IMR-90 (cell line): ENCODE measurements at regions of chr3 and their contacts with region 1.

Region 1: DNA sequence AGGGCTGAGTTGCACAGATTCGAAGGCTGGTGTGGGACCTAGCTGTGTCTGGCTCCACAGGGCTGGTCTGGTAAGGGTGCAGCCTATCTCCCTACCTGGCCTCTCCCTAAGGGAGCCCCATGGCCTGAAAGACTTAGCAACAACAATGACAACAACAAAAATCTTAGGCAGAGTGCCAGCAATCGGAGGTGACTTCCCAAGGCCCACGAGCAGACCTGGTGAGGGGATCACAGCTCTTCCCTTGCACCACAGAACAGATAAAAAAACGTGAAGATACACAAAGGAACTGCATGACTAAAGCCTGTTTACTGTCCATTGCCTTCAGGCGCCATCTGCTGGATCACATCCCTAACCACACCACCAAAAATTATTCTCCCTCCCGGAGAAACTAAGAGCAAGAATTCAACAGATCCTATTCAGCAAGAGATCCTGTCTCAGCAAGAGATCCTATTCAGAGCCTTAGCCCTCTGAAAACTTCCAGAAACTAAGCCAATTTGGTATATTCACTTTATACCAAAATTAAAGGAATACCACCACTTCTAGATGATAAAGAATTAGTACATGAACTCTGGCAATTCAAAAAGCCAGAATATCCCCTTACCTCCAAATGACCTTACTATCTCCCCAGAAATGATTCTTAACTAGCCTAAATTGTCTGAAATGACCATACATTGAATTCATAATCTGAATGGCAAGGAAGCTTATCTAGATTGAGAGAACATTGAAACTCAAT is 24.1 kb upstream of the OR5K4 start:
- DNase-seq: peak; percentile 51
- ATAC-seq: peak; percentile 93
- H3K4me3 ChIP-seq: no peak overlapping the region
- H3K27ac ChIP-seq: no peak overlapping the region
- H3K4me1 ChIP-seq: no peaks in the 10 kb centered on the region
- H3K27me3 ChIP-seq: peaks cover 3% of the 10 kb centered on the region; the same call in 1 of the 2 replicates
- CTCF ChIP-seq: peak; percentile 75
- POLR2A ChIP-seq: no peak
- RAD21 ChIP-seq: peak; percentile 62

Region 2: DNA sequence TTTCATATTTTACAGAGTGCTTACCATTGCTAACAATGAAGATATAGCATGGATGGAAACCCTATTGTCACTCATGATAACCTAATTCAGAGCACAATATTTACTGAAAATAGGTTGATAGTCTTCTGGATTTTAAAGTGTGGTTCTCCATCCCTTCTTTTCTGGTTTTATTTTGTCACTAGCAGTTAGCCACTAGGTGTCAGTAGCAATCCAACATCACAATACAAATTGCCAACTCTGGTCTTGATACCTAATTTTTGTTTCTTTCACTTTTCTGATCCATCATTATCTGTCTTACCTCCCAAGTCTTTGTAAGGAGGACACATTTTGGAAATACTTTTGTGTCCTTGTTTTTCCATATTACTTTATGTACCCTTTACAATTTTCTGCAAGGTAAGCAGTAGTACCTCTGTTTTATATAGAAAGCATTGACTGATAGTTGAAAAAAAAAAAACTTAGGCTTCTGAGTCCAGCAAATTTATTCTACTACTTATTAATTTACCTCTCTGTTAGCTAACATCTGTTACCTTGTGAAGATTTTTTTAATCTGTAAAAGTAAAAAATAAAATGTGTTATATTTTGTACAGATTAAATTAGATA is 536.0 kb before region 1 on chr3:
- CTCF ChIA-PET with region 1: no interaction called
- POLR2A ChIA-PET with region 1: no interaction called
- dilution Hi-C with region 1: no loop called
- in situ Hi-C with region 1: loop called (anchors 25 kb)
- intact Hi-C with region 1: loop called (anchors 10 kb)
- DNase-seq: peak; percentile 64
- ATAC-seq: peak; percentile 65
- H3K4me3 ChIP-seq: no peak overlapping the region
- H3K27ac ChIP-seq: no peak overlapping the region
- H3K4me1 ChIP-seq: no peaks in the 10 kb centered on the region
- H3K27me3 ChIP-seq: no peaks in the 10 kb centered on the region
- CTCF ChIP-seq: peak; percentile 91
- POLR2A ChIP-seq: no peak
- RAD21 ChIP-seq: peak; percentile 89

Region 3: DNA sequence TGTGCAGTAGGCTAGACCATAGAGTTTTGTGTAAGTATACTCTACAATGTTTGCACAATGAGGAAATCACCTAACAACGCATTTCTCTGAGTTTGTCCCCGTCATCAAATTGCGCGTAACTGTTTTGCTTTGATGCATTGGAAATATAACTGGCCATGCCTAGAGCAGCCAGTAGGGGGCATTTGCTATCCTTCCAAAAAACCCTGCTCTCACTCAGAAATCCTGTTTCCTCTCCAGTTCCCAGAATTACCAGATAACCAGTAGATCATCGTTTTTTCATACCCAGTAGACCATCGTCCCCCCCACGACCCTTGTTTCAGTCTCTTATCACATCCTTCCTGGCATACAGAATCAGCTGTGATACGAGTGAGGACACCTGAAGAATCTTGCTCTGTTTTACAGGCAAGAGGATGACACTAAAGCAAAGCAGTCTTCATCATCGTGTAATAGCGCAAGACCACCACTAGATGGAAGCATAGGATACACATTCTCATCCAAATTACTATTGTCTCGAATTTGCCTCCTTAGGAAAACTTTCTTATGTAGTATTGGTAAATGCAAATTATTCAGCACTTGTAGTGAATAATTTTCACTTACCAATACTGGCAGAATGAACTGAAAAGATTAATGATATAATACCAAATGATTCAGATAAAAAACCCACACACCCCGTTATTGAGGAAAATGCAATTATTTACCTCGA is 290.1 kb before region 1 on chr3:
- CTCF ChIA-PET with region 1: interaction called, 16 read pairs
- POLR2A ChIA-PET with region 1: no interaction called
- dilution Hi-C with region 1: loop called (anchors 25 kb)
- in situ Hi-C with region 1: loop called (anchors 5 kb)
- intact Hi-C with region 1: loop called (anchors 1 kb)
- DNase-seq: peak; percentile 87
- ATAC-seq: peak; percentile 99
- H3K4me3 ChIP-seq: peak overlapping the region; percentile 66
- H3K27ac ChIP-seq: no peak overlapping the region
- H3K4me1 ChIP-seq: no peaks in the 10 kb centered on the region
- H3K27me3 ChIP-seq: no peaks in the 10 kb centered on the region
- CTCF ChIP-seq: peak; percentile 69
- POLR2A ChIP-seq: no peak
- RAD21 ChIP-seq: peak; percentile 74

Region 4: DNA sequence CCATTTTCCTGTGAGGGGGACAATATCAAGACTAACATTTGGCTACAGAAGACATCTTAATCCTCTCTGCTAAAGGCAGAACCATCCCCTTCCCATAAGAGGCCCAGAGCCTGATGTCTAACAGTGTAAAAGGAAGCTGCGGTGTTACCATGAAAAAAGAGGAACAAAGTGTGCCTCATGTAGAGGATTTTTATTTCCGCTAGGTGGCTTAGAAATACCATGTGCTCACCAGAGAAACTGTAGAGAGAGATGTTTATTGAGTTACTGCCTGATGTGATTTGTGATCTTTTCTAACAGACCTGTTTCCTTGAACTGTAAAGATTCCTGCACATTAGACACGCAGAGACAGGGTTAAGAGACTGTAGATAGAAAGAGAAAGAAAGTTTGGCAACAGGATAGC is 141.0 kb before region 1 on chr3:
- CTCF ChIA-PET with region 1: no interaction called
- POLR2A ChIA-PET with region 1: no interaction called
- dilution Hi-C with region 1: no loop called
- in situ Hi-C with region 1: no loop called
- intact Hi-C with region 1: loop called (anchors 2 kb)
- DNase-seq: no peak
- ATAC-seq: no peak
- H3K4me3 ChIP-seq: no peak overlapping the region
- H3K27ac ChIP-seq: no peak overlapping the region
- H3K4me1 ChIP-seq: no peaks in the 10 kb centered on the region
- H3K27me3 ChIP-seq: no peaks in the 10 kb centered on the region
- CTCF ChIP-seq: 0 out of 2 replicates have a peak, but pooled peaks have one; percentile 12
- POLR2A ChIP-seq: no peak
- RAD21 ChIP-seq: no peak

Region 5: GRCh38 chr3:98573181-98573728 is 243.7 kb after region 1 on chr3:
- CTCF ChIA-PET with region 1: interaction called, 3 read pairs
- POLR2A ChIA-PET with region 1: no interaction called
- dilution Hi-C with region 1: no loop called
- in situ Hi-C with region 1: loop called (anchors 25 kb)
- intact Hi-C with region 1: loop called (anchors 1 kb)
- DNase-seq: peak; percentile 33
- ATAC-seq: peak; percentile 46
- H3K4me3 ChIP-seq: no peak overlapping the region
- H3K27ac ChIP-seq: no peak overlapping the region
- H3K4me1 ChIP-seq: peaks cover 2% of the 10 kb centered on the region; the same call in 1 of the 2 replicates
- H3K27me3 ChIP-seq: no peaks in the 10 kb centered on the region
- CTCF ChIP-seq: peak; percentile 51
- POLR2A ChIP-seq: no peak
- RAD21 ChIP-seq: peak; percentile 37

Region 6: DNA sequence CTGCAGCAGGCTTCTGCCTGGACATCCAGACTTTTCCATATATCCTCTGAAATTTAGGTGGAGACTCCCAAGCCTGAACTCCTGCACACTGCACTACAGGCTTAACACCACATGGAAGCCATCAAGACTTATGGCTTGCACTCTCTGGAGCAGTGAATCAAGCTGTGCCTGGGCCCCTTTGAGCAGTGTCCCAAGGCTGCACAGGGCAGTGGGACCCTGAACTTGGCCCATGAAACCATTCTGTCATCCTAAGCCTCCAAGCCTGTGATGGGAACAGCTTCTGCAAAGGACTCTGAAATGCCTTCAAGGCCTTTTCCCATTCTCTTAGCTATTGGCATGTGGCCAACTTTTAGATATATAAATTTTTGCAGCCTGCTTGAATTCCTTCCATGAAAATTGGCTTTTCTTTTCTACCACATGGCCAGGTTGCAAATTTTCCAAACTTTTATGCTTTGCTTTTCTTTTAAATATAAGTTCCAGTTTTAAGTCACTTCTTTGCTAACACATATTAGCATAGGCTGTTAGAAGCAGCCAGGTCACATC is 829.7 kb after region 1 on chr3:
- CTCF ChIA-PET with region 1: no interaction called
- POLR2A ChIA-PET with region 1: no interaction called
- dilution Hi-C with region 1: no loop called
- in situ Hi-C with region 1: no loop called
- intact Hi-C with region 1: no loop called
- DNase-seq: no peak
- ATAC-seq: no peak
- H3K4me3 ChIP-seq: no peak overlapping the region
- H3K27ac ChIP-seq: no peak overlapping the region
- H3K4me1 ChIP-seq: no peaks in the 10 kb centered on the region
- H3K27me3 ChIP-seq: no peaks in the 10 kb centered on the region
- CTCF ChIP-seq: no peak
- POLR2A ChIP-seq: no peak
- RAD21 ChIP-seq: no peak